ENCODE measurements at regions of chr1 and their contacts with region 1.

Region 1: DNA sequence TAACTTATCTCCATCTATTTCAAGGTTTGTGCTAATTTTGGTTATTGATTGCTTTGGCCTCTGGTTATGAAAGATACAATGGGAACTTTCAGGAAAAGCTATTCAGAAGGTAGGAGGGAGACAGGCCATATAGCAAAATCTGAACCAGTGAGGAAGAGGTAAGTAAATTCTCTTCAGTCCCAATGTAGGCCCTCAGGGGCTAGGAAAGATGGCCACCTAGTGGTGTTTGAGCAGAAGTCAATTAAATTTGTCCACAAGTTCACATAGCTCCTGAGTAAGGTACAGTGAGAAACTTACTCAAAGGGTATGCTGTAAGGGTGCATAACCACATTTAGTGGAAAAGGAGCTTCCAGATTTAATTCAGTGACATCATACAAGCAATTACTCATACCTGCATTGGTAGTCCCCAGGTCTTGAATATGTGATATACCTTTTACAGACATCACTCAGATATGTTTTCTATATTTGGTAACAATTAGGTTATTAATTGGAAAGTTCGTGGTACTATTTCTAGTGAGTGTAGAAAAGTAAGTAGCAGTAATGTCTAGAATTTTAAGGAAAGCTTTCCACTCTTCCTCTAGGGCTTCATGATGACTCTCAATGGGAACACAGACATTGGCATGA is 21.4 kb upstream of the FMO1 start:
- DNase-seq: peak in 5 of 10 donors; percentile 11 to 84 (median 28)

Region 2: GRCh38 chr1:170296642-170297041 is 930.2 kb before region 1 on chr1:
- intact Hi-C with region 1: no loop called
- DNase-seq: no peak

Region 3: GRCh38 chr1:171081314-171081753 is 145.5 kb before region 1 on chr1:
- intact Hi-C with region 1: loop called (anchors 1 kb)
- DNase-seq: no peak

Region 4: GRCh38 chr1:171206978-171207355 is 19.9 kb before region 1 on chr1:
- intact Hi-C with region 1: no loop called
- DNase-seq: no peak

Region 5: DNA sequence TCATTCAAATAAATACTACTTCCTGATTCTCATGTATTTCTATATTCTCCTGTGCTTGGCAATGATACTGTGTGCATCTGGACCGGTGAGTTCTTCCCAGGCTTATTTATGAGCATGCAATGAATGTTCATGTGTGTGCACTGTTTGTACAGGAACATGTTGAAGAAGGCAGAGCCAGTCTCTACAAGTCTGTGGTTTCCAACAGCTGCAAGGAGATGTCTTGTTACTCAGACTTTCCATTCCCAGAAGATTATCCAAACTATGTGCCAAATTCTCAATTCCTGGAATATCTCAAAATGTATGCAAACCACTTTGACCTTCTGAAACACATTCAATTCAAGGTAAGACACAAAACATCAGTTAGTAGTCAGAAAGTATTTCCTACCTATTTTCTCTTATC is 40.5 kb after region 1 on chr1:
- intact Hi-C with region 1: no loop called
- DNase-seq: no peak

Measured in posterior cingulate gyrus (tissue), 11 donors.